Heart right ventricle (tissue), 16 donors: ENCODE measurements at regions of chrX and their contacts with region 1.

Region 1: GRCh38 chrX:54999717-55000598 is at the start of gene APEX2:
- DNase-seq: peak; percentile 89 to 91
- ATAC-seq: peak; percentile 95 to 99 (median 98)
- H3K4me3 ChIP-seq: peak within 1 kb of the TSS; percentile 32 to 77 (median 65)
- H3K27ac ChIP-seq: peak within 1 kb of the TSS; percentile 37 to 94 (median 88)
- H3K4me1 ChIP-seq: peaks cover 0 to 18% (median 9%) of the 10 kb centered on the region in 9 donors
- H3K27me3 ChIP-seq: peaks cover 0 to 17% (median 0%) of the 10 kb centered on the region in 7 donors
- CTCF ChIP-seq: no peak
- total RNA-seq, gene APEX2: 8.7 to 12.5 (median 9.8) TPM

Region 2: GRCh38 chrX:53974529-53974928 is 1025.4 kb before region 1 on chrX:
- intact Hi-C with region 1: no loop called
- DNase-seq: no peak
- ATAC-seq: no peak
- H3K4me3 ChIP-seq: no peak overlapping the region
- H3K27ac ChIP-seq: no peak overlapping the region
- H3K4me1 ChIP-seq: no peaks in the 10 kb centered on the region
- H3K27me3 ChIP-seq: no peaks in the 10 kb centered on the region
- CTCF ChIP-seq: no peak

Region 3: DNA sequence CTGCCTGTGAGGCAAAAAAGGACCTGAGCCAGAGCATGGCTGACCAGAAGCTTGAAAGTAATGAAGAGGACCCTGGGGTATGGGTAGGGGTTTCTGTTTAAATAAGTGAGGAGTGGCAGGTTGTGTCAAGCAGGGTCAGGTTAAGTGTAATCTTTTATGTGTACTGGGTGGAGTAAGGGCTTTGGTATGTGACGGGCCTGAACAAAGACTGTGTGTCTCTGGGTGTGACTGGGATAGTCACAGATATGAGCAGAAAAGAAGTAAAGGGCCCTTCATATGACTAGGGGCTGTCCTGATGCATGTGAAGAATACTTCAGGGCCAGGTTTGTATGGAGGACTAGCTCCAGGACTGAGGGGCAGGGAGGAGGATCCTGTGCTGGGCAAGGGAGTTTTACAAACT is 284.3 kb before region 1 on chrX:
- intact Hi-C with region 1: no loop called
- DNase-seq: no peak
- ATAC-seq: no peak
- H3K4me3 ChIP-seq: no peak overlapping the region
- H3K27ac ChIP-seq: no peak overlapping the region
- H3K4me1 ChIP-seq: no peaks in the 10 kb centered on the region
- H3K27me3 ChIP-seq: peaks cover 0 to 7% (median 0%) of the 10 kb centered on the region in 7 donors
- CTCF ChIP-seq: no peak

Region 4: GRCh38 chrX:54808605-54809483 is 191.1 kb before region 1 on chrX:
- intact Hi-C with region 1: loop called in 2 of 10 experiments (anchors 5 to 10 kb)
- DNase-seq: peak; percentile 89 to 93
- ATAC-seq: peak; percentile 87 to 96 (median 93)
- H3K4me3 ChIP-seq: peak overlapping the region; percentile 47 to 84 (median 72)
- H3K27ac ChIP-seq: peak overlapping the region; percentile 65 to 94 (median 92)
- H3K4me1 ChIP-seq: peaks cover 0 to 16% (median 7%) of the 10 kb centered on the region in 9 donors
- H3K27me3 ChIP-seq: no peaks in the 10 kb centered on the region
- CTCF ChIP-seq: no peak

Region 5: GRCh38 chrX:54817220-54817820 is 182.6 kb before region 1 on chrX:
- intact Hi-C with region 1: loop called in 1 of 10 experiments (anchors 10 kb)
- DNase-seq: no peak
- ATAC-seq: peak in 2 of 8 donors; percentile 4 to 28
- H3K4me3 ChIP-seq: no peak overlapping the region
- H3K27ac ChIP-seq: no peak overlapping the region
- H3K4me1 ChIP-seq: no peaks in the 10 kb centered on the region
- H3K27me3 ChIP-seq: no peaks in the 10 kb centered on the region
- CTCF ChIP-seq: no peak

Region 6: DNA sequence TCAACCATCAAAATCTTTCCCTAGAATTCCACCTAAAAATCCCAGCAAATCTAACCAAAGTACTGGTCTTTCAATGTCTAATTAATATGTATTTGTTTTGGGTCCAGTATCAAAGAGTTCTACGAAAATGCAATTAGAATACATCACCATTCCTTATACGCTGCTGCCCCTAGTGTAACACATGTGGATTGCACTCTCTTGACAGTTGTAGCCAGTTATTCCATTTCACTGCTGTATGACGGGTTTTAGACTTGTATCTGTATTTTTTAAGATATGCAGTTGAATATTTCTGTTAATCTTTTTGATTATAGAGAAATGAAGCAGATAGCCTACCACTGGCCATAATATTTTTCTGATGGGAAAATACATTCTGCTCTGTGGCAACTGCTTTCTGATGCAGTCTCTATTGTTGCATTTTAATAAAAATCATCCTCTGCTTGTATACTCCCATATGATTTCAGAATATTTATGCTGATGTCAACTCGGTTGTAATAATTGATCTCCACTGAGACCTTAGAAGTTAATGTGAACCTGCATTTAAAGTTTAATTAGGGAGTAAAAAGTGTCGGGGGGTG is 57.8 kb after region 1 on chrX:
- intact Hi-C with region 1: no loop called
- DNase-seq: peak in 1 of 2 donors; percentile 7
- ATAC-seq: peak in 7 of 8 donors; percentile 51 to 79 (median 69)
- H3K4me3 ChIP-seq: peak overlapping the region in 5 of 10 donors; percentile 21 to 33 (median 31)
- H3K27ac ChIP-seq: no peak overlapping the region
- H3K4me1 ChIP-seq: peaks cover 0 to 5% (median 0%) of the 10 kb centered on the region in 9 donors
- H3K27me3 ChIP-seq: peaks cover 0 to 52% (median 0%) of the 10 kb centered on the region in 7 donors
- CTCF ChIP-seq: peak; percentile 50 to 80 (median 75)

Region 7: GRCh38 chrX:55151199-55151598 is 151.2 kb after region 1 on chrX:
- intact Hi-C with region 1: loop called in 1 of 10 experiments (anchors 5 kb)
- DNase-seq: no peak
- ATAC-seq: no peak
- H3K4me3 ChIP-seq: no peak overlapping the region
- H3K27ac ChIP-seq: no peak overlapping the region
- H3K4me1 ChIP-seq: peaks cover 0 to 17% (median 0%) of the 10 kb centered on the region in 9 donors
- H3K27me3 ChIP-seq: peaks cover 0 to 23% (median 0%) of the 10 kb centered on the region in 7 donors
- CTCF ChIP-seq: no peak